Activated naive CD4-positive, alpha-beta T cell treated with anti-CD3 and anti-CD28 coated beads for 36 hours (primary cell): ENCODE measurements at regions of chr5 and their contacts with region 1.

Region 1: DNA sequence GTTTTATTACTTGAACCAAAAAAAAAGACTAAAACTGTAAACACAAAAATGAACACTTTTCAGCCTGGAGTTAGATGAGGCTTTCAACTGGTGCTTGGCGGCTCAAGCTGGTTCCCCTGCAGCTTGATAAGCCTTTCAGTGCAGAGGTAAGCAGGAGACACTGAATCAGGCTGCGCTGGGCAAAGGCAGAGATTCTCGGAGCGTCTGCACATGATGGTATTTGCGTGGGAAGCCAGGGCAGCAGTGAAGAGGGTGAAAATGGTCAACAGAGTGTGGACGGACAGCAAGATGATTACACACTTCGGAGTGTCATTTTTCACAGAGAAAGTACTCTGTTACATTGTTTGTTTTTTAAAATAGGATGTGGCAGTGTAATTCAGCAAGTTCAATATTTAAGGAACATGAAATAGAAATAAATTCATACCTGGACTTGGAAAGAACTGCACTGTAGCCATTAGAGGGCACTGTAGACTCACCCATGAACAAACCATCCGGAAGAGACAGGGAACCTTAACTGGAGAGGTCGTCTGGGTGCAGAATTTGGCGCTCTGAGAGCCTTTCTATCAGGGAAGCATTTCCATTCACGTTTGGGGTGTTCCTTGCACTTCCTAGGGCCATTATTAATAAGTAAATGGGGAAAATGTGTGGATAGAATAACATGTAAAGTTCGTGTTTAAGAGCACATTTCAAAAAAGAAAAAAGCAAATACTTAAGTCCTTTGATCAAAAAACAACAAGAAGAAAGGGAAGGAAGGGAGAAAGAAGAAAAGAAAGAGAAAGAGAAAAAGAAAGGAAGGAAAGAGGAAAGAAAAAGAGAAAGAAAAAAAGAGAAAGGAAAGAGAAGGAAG is 69.8 kb downstream of the ICE1 start:
- DNase-seq: peak; percentile 58
- H3K4me3 Mint-ChIP-seq: no peak overlapping the region
- H3K27ac Mint-ChIP-seq: no peak overlapping the region
- H3K4me1 Mint-ChIP-seq: peaks cover 10% of the 10 kb centered on the region
- H3K27me3 Mint-ChIP-seq: peaks cover 10% of the 10 kb centered on the region

Region 2: GRCh38 chr5:5481206-5481605 is 11.1 kb before region 1 on chr5:
- CTCF ChIA-PET with region 1: no interaction called
- intact Hi-C with region 1: no loop called
- DNase-seq: no peak
- H3K4me3 Mint-ChIP-seq: no peak overlapping the region
- H3K27ac Mint-ChIP-seq: peak overlapping the region; percentile 53
- H3K4me1 Mint-ChIP-seq: peaks cover 23% of the 10 kb centered on the region
- H3K27me3 Mint-ChIP-seq: no peaks in the 10 kb centered on the region

Region 3: DNA sequence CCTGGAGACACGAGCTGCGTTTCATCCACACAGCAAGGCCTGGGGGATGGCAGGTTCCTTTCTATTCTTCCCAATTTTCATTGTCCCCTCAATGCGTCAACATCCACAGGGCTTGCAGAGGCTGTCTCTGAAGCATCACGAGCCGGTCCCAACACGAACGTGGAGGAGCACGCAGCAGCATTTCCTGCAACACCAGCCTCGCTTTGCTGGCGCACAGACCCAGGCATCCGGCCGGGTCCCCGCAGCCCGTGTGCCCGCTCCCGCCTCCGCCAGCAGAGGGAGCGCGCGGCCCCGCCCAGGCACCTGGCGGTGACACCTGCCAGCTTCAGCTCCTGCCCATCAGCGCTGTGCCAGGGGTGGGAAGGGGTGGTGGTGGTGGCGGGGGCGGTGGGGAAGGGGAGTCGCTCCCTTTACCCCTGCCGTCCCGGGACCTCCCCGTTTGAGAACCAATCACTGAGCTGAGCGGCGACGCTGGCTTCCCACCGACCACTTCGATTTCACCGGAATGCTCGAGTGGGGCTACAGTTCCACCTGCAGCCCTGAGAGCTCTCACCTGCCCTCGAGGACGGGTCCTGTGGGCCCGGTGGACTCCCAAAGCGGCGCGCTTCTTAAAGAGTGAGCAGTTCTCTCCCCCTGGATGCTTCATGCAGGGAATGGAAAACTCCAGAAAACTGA is 394.6 kb after region 1 on chr5:
- CTCF ChIA-PET with region 1: no interaction called
- intact Hi-C with region 1: loop called (anchors 5 kb)
- DNase-seq: peak; percentile 49
- H3K4me3 Mint-ChIP-seq: no peak overlapping the region
- H3K27ac Mint-ChIP-seq: no peak overlapping the region
- H3K4me1 Mint-ChIP-seq: peaks cover 2% of the 10 kb centered on the region
- H3K27me3 Mint-ChIP-seq: peaks cover 28% of the 10 kb centered on the region

Region 4: GRCh38 chr5:6435356-6435755 is 943.0 kb after region 1 on chr5:
- CTCF ChIA-PET with region 1: no interaction called
- intact Hi-C with region 1: loop called (anchors 5 kb)
- DNase-seq: peak; percentile 28
- H3K4me3 Mint-ChIP-seq: no peak overlapping the region
- H3K27ac Mint-ChIP-seq: no peak overlapping the region
- H3K4me1 Mint-ChIP-seq: no peaks in the 10 kb centered on the region
- H3K27me3 Mint-ChIP-seq: peaks cover 41% of the 10 kb centered on the region

Region 5: DNA sequence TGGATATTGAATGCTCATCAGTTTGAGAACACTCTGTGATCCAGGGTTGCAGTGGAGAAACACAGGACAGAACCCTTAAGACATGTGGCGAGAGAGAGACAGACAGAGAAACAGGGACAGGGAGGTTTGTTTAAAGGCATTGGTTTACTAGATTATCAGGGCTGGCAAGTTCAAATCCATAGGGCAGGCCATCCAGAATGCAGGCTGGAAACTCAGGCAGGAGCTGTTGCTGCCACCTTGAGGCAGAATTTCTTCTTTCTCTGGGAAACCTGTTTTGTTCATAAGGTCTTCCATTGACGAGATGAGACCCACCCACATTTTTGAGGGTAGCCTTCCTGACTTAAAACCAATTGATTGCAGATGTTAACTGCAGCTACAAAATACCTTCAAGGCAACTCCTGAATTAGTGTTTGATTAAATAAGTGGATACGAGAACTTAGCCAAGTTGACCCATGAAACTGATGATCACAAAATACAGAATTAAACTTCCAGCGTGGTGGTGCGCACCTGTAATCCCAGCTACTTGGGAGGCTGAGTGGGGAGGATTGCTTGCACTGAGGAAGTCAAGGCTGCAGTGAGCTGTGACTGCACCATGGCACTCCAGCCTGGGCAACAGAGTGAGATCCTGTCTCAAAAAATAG is 1084.7 kb after region 1 on chr5:
- CTCF ChIA-PET with region 1: no interaction called
- intact Hi-C with region 1: loop called (anchors 2 kb)
- DNase-seq: peak; percentile 44
- H3K4me3 Mint-ChIP-seq: no peak overlapping the region
- H3K27ac Mint-ChIP-seq: no peak overlapping the region
- H3K4me1 Mint-ChIP-seq: no peaks in the 10 kb centered on the region
- H3K27me3 Mint-ChIP-seq: peaks cover 20% of the 10 kb centered on the region

Region 6: DNA sequence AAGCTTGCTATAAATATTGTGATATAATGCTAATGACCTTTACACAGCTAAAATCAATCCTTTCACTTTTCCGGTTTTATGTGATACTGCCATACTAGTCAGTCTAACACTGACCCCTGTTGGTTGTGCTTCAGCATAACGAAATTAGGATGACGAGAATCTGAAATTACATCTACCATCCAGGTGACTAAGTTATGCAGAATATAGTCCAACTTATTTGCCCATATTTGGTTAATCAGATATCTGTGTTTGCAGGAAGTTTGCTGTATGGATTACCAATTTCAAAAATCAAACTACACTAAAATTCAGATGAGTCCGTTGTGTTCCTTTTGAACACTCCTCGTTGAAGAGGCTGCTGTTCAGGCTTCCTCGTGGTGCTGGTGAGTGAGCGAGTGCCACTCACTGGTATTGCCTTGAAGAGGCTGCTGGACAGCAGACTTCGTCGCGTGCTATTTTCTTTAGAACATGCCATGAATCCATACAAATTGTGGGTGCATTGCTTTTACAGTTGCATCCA is 1253.5 kb after region 1 on chr5:
- CTCF ChIA-PET with region 1: no interaction called
- intact Hi-C with region 1: loop called (anchors 5 kb)
- DNase-seq: peak; percentile 35
- H3K4me3 Mint-ChIP-seq: no peak overlapping the region
- H3K27ac Mint-ChIP-seq: no peak overlapping the region
- H3K4me1 Mint-ChIP-seq: peaks cover 7% of the 10 kb centered on the region
- H3K27me3 Mint-ChIP-seq: no peaks in the 10 kb centered on the region